Pancreas (tissue), 10 donors: ENCODE measurements at regions of chr3 and their contacts with region 1.

Region 1: DNA sequence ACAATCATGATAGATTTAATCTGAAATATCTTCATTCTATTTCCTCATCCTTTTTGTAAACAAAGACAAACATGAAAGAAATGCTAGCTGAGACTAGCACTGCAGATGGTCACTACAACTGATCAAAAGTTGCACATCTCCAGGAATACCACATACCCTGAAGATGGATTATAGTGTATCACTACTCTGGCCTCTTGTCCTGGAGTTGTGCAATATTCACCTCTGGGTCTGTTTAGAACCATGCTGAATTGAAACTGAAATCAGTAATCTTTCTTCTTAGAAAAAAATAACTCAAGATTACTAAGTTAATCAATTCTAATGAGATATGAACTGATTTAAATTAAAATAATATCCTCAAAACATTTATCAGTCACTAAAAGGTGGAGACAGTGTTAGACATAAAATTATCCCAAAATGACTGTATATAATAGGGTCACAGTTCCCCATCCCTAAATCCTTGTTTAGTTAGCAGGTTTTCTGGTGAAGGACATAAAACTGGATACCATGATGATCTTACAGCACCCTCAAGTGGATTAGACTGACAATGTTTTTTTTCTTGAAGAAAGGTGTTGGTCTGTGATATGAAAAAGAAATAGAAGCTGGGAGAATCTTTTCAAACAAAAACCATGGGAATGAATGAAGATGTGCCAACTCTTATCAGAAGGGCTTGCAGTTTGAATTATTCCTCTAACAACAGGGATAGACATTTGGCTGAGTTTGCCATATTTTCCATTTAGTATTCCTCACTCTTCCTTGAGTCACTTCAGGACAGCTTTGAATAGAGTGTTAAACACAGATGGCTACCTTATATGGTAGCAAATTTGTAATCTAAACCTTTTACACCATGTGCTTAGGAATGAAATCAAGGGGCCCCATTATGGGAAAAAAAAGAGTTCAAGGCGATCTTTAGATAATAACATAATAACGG is 7.1 kb upstream of the TTC14 start:
- DNase-seq: no peak
- ATAC-seq: peak; percentile 79 to 96 (median 91)
- H3K4me3 ChIP-seq: no peak overlapping the region
- H3K27ac ChIP-seq: no peak overlapping the region
- H3K4me1 ChIP-seq: peaks cover 0 to 3% (median 0%) of the 10 kb centered on the region in 3 donors
- H3K27me3 ChIP-seq: no peaks in the 10 kb centered on the region
- CTCF ChIP-seq: peak in 3 of 4 donors; percentile 12 to 40 (median 31)

Region 2: GRCh38 chr3:179929091-179929529 is 665.8 kb before region 1 on chr3:
- intact Hi-C with region 1: loop called in 1 of 3 experiments (anchors 10 kb)
- DNase-seq: peak in 5 of 6 donors; percentile 32 to 65 (median 45)
- ATAC-seq: peak; percentile 71 to 90 (median 84)
- H3K4me3 ChIP-seq: no peak overlapping the region
- H3K27ac ChIP-seq: no peak overlapping the region
- H3K4me1 ChIP-seq: no peaks in the 10 kb centered on the region
- H3K27me3 ChIP-seq: no peaks in the 10 kb centered on the region
- CTCF ChIP-seq: peak; percentile 17 to 79 (median 71)

Region 3: DNA sequence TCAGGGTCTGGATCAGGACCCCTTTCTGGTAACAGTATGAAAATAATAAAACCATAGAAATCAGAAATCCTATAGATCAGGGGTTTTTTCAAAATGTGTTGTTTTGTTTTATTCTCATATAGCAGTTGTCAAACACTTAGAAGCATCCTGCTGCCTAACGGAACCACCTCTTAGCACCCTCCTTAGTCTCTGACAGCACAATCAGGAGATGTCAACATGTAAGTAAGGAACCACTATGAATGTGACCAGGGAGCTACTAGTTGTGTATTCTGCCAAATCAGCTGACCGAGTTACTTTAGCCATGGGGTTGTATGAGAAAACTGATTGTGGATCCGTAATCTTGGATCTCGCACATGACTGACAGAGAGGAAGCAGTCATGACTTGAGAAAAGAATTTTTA is 62.2 kb after region 1 on chr3:
- intact Hi-C with region 1: no loop called
- DNase-seq: no peak
- ATAC-seq: no peak
- H3K4me3 ChIP-seq: no peak overlapping the region
- H3K27ac ChIP-seq: no peak overlapping the region
- H3K4me1 ChIP-seq: no peaks in the 10 kb centered on the region
- H3K27me3 ChIP-seq: no peaks in the 10 kb centered on the region
- CTCF ChIP-seq: no peak

Region 4: DNA sequence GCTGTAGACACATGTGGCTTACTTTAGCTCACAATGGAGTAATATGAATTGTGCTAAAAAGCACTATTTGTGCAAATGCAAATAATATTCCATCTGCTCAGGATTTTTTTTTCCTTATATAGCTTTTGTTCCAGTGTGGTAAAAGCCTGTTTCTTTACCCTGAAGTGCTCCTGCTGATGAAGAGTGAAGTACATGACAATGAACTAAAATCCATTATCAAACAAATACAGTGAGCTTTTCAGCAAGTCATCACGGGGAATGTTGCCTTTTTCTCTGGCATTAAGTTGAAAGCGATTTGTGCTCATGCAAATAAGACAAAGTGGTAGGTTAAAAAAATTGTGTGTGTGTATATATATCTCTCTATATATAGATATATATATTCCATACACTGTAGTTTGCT is 113.0 kb after region 1 on chr3:
- intact Hi-C with region 1: no loop called
- DNase-seq: no peak
- ATAC-seq: no peak
- H3K4me3 ChIP-seq: no peak overlapping the region
- H3K27ac ChIP-seq: no peak overlapping the region
- H3K4me1 ChIP-seq: no peaks in the 10 kb centered on the region
- H3K27me3 ChIP-seq: no peaks in the 10 kb centered on the region
- CTCF ChIP-seq: no peak